GM10248 (cell line): ENCODE measurements at regions of chr16 and their contacts with region 1.

Region 1: GRCh38 chr16:71903608-71904007 is 8.3 kb downstream of the IST1 start:
- DNase-seq: no peak
- CTCF ChIP-seq: no peak

Region 2: GRCh38 chr16:71919035-71919434 is 15.4 kb after region 1 on chr16:
- CTCF ChIA-PET with region 1: interaction called, 12 read pairs
- POLR2A ChIA-PET with region 1: interaction called, 12 read pairs
- DNase-seq: peak; percentile 55
- CTCF ChIP-seq: no peak